Adrenal gland (tissue), 19 donors: ENCODE measurements at regions of chr16 and their contacts with region 1.

Region 1: DNA sequence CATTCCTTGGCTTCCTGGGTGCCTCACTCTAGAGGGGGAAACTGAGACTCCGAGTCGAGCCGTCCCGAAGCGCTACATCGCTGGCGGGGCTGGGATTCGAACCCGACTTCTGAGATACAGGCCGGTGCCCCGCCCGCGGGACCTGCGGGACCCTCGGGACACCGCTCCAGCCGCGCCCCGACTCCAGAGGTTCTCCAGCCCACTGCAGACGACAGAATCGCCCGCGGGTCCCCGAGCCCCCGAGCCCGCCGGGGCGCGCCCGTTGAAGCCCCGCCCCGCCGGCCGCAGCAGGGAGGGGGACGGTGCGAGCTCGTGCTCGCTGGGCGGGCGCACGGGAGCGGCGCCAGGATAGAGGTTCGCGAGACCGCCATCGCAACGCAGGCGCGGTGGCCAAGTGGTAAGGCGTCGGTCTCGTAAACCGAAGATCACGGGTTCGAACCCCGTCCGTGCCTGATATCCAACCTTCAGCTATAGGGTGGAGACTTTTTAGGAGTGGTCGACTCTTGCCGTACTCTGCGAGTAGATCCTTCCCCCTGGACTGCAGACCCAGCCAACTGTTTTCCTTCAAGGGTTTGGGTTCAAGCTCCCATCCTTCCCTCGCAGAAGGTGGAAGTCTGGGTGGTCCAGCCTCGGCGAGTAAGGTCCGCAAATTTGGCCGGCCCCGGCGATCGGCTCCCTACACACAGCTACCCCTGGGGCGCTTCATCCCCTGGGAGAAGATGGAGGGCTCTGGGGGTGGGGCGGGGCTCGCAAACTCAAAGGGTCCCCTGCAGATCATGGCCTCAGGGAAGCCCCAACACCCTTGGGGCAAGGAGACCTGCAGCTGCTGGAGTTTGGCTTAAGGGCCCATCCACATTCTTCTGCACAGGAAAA is 214.6 kb downstream of the MRTFB start:
- DNase-seq: peak; percentile 87 to 98 (median 94)
- H3K4me3 ChIP-seq: peak overlapping the region; percentile 25 to 81 (median 67)
- H3K27ac ChIP-seq: peak overlapping the region in 4 of 5 donors; percentile 68 to 92 (median 88)
- H3K4me1 ChIP-seq: no peaks in the 10 kb centered on the region
- H3K27me3 ChIP-seq: no peaks in the 10 kb centered on the region
- CTCF ChIP-seq: peak in 1 of 6 experiments; percentile 2
- POLR2A ChIP-seq: no peak

Region 2: DNA sequence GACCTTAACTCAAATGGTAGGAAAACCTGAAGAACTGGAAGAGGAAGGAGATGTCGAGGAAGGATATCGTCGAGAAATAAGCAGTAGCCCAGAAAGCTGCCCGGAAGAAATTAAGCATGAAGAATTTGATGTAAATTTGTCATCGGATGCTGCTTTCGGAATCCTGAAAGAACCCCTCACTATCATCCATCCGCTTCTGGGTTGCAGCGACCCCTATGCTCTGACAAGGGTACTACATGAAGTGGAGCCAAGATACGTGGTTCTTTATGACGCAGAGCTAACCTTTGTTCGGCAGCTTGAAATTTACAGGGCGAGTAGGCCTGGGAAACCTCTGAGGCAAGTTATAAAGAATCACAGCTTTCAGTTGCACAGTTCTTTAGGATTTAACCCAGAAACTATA is 350.3 kb before region 1 on chr16:
- intact Hi-C with region 1: loop called in 1 of 2 experiments (anchors 10 kb)
- DNase-seq: no peak
- H3K4me3 ChIP-seq: no peak overlapping the region
- H3K27ac ChIP-seq: peak overlapping the region in 1 of 5 donors; percentile 83
- H3K4me1 ChIP-seq: peaks cover 4 to 19% of the 10 kb centered on the region in 2 donors
- H3K27me3 ChIP-seq: no peaks in the 10 kb centered on the region
- CTCF ChIP-seq: peak in 5 of 6 experiments; percentile 4 to 31 (median 13)
- POLR2A ChIP-seq: no peak